Endothelial cell of umbilical vein (primary cell): ENCODE measurements at regions of chr7 and their contacts with region 1.

Region 1: GRCh38 chr7:139284241-139284896 is 53.3 kb downstream of the UBN2 start:
- DNase-seq: no peak
- H3K4me3 ChIP-seq: no peak overlapping the region
- H3K27ac ChIP-seq: no peak overlapping the region
- H3K4me1 ChIP-seq: no peaks in the 10 kb centered on the region
- H3K27me3 ChIP-seq: no peaks in the 10 kb centered on the region
- CTCF ChIP-seq: no peak
- POLR2A ChIP-seq: no peak

Region 2: DNA sequence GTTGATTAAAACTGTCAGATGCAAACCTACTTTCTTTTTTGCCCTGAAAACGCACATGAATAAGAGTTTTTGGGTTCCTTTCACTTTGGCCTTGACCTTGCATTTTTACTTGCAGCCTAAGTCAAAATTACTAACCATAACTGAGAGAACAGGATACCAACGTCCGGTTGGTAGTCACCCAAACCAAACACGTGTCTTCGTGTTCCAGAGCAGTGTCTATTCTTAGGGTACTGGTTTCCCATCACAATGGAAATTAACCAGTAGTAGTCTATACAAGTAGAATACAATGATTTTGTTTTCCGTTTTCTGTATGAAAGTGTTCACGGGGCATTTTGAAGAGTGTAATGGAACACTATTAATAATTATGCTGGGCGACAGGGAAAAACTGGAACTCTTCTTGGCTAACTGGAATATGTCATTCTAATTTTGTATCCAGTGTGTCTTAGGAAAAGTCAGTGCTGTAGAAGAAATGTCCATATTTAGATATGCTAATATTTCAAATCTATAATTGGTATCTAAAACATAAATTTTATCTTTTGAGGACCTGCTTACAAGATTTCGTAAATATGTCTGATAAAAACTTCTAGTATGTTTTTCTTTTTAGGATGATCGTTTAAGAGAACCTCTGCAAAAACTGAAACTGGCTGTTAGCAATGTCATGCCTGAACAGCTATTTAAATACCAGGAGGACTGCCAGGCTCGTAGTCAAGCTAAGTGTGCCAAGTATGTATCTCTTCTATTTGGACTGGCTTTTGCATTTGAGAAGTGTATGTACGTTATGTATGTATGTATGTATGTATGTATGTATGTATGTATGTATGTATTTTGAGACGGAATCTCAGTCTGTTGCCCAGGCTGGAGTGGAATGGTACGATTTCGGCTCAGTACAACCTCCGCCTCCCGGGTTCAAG is 12.4 kb before region 1 on chr7:
- CTCF ChIA-PET with region 1: interaction called, 3 read pairs
- POLR2A ChIA-PET with region 1: no interaction called
- dilution Hi-C with region 1: no loop called
- intact Hi-C with region 1: loop called (anchors 1 kb)
- DNase-seq: no peak
- H3K4me3 ChIP-seq: no peak overlapping the region
- H3K27ac ChIP-seq: no peak overlapping the region
- H3K4me1 ChIP-seq: no peaks in the 10 kb centered on the region
- H3K27me3 ChIP-seq: no peaks in the 10 kb centered on the region
- CTCF ChIP-seq: no peak
- POLR2A ChIP-seq: no peak

Region 3: DNA sequence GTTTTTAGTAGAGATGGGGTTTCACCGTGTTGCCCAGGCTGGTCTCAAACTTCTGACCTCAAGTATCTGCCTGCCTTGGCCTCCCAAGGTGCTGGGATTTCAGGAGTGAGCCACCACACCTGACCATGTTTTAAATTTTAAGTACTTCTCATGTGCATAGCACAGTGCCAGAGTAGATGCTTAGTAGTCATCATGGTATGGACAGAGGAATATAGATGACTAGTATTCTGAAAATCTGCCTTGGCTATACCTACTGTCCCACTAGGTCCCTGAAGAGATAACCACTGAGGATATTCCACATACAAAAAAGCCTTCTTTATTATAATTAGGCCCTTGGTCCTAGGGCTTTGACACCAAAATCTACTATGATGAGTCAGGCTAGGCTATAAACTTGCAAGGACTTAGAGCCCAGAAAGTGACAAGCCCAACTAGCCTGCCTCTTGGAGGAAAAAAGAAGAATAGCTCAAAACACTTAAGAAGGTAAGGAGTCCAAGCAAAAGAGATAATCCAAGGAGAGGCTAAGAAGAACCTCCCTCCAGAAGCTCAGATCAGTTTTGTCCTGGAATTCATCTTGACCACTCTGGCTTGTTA is 109.3 kb after region 1 on chr7:
- CTCF ChIA-PET with region 1: no interaction called
- POLR2A ChIA-PET with region 1: no interaction called
- dilution Hi-C with region 1: no loop called
- intact Hi-C with region 1: no loop called
- DNase-seq: no peak
- H3K4me3 ChIP-seq: no peak overlapping the region
- H3K27ac ChIP-seq: no peak overlapping the region
- H3K4me1 ChIP-seq: no peaks in the 10 kb centered on the region
- H3K27me3 ChIP-seq: no peaks in the 10 kb centered on the region
- CTCF ChIP-seq: no peak
- POLR2A ChIP-seq: no peak